ENCODE measurements at regions of chr9 and their contacts with region 1.

Region 1: DNA sequence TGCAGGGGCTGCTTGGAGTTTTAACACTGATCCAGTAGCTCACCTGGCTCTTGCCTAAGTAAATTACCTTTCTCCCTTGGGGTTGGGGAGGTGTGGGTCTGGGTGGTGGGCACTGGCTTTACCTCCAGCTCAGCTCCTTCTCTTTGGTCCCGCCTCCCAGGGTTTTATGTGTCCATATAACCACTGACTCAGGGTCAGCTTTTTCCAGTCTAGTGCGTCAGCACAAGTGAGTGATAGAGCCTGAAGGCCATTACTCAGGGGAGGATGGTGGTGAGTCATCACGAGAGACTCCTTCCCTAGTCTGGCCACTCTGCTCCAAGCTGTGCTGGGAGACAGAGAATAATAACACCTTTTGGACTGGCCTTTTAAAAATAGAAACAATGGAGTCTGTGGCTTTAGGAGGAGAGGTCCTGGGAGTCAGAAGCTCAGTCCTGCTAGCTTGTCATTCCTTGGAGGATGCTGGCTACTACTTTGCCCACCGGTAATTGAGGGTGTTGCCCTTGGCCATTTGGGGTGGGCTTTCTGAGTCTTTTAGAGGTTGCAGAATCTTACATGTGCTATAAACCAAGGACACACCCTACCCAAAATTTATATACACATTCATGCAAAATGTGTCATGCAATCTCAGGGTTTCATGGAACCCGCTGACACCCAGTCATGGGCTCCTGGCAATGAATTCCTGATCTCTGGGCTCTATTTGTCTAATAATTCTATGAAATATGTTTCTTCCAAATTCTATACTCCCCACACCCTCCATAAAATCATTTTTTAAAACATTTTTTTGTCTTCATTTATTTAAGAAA is 35.5 kb upstream of the ATP6V1G1 start:
- DNase-seq: peak; percentile 89 to 97
- ATAC-seq: peak; percentile 100
- H3K4me3 ChIP-seq: no peak overlapping the region
- H3K27ac ChIP-seq: peak overlapping the region; percentile 73 to 86
- H3K4me1 ChIP-seq: peaks cover 21% of the 10 kb centered on the region
- CTCF ChIP-seq: no peak
- EP300 ChIP-seq: peak; percentile 26 to 49; a peak in 1 of 5 replicates
- POLR2A ChIP-seq: no peak
- RAD21 ChIP-seq: no peak

Region 2: GRCh38 chr9:114487607-114488300 is 64.3 kb before region 1 on chr9:
- CTCF ChIA-PET with region 1: interaction called, 11 read pairs
- POLR2A ChIA-PET with region 1: no interaction called
- DNase-seq: peak; percentile 74 to 79
- ATAC-seq: peak; percentile 92 to 98
- H3K4me3 ChIP-seq: no peak overlapping the region
- H3K27ac ChIP-seq: no peak overlapping the region
- H3K4me1 ChIP-seq: peaks cover 9% of the 10 kb centered on the region; the same call in 1 of the 3 replicates
- CTCF ChIP-seq: peak; percentile 77
- EP300 ChIP-seq: no peak
- POLR2A ChIP-seq: no peak
- RAD21 ChIP-seq: peak; percentile 84 to 87

Region 3: GRCh38 chr9:114538241-114538640 is 13.8 kb before region 1 on chr9:
- CTCF ChIA-PET with region 1: interaction called, 15 read pairs
- POLR2A ChIA-PET with region 1: interaction called, 10 read pairs
- DNase-seq: peak in 1 of 2 experiments; percentile 70
- ATAC-seq: peak; percentile 95 to 97
- H3K4me3 ChIP-seq: no peak overlapping the region
- H3K27ac ChIP-seq: no peak overlapping the region
- H3K4me1 ChIP-seq: no peaks in the 10 kb centered on the region
- CTCF ChIP-seq: peak; percentile 27; the same call in 2 of the 3 replicates
- EP300 ChIP-seq: no peak
- POLR2A ChIP-seq: no peak
- RAD21 ChIP-seq: peak; percentile 30 to 35; a peak in 3 of 5 replicates

Measured in A549 (cell line).